ENCODE measurements at regions of chr2 and their contacts with region 1.

Region 1: DNA sequence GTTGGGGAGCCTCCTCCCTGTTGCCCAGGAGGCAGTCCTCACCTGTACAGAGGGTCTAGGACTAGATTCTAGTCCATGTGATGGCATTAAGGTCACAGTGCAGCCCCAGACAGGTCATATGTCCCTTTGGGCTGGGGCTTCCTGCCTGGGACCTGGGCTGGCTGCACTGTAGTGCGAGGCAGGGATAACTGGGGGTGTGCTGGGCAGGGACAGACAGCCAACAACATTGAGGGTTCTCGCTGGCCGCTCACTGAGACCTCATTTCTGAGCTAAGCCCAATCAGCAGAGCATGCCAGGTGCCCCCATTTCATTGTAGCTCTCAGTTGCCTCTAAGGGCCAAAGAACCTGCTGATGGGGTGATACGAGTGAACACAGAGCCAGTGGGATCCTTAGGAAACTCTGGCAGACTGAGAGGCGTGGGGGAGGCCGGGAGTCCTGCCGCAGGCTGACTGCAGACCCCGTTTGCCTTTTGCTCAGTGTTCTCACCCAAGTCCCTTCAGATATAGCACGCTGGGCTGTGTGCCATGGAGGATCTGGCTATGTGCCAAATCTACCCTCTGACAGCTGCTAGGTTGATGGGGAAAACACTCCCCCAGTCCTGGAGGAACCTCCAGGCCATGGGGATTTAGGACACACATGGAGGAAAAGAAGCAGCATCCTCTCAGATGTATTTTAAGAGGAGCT is 51.9 kb downstream of the DYSF start:
- DNase-seq: peak; percentile 44
- ATAC-seq: peak; percentile 28 to 51

Region 2: GRCh38 chr2:71299507-71299906 is 205.7 kb before region 1 on chr2:
- intact Hi-C with region 1: loop called (anchors 5 kb)
- DNase-seq: no peak
- ATAC-seq: no peak

Region 3: DNA sequence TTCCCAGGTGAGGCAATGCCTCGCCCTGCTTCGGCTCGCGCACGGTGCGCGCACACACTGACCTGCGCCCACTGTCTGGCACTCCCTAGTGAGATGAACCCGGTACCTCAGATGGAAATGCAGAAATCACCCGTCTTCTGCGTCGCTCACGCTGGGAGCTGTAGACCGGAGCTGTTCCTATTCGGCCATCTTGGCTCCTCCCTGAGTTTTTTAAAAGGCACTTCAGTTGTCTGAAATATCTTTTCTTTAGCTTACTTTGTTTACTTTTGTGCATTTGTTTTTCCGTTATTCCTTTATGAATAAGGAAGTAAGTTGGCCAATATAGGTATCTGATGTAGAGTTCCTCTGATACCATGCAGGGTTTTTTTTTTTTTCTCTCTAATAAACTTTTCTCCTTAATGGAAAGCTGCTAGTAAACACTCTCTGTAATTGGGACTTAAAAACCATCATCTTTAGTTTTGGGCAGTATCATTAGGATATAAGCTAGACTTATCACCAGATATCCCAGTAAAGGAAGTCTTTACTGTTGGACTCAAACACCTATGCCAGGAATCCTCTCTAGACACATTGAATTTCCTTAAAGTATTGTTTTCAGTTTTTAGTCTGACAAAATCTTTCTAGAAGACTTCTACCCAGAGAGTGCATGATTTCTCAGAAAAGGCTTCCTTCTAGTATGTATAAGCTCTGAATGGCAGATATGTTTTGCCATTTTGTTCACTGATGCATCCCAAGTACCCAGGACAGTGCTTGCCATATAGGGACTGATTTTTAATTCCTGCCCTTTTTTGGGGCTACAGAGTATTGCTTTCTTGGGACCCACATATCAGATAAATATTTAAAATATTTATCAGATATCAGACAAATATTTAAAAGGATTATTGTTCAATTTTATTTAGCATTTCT is 87.7 kb before region 1 on chr2:
- intact Hi-C with region 1: no loop called
- DNase-seq: no peak
- ATAC-seq: no peak

Region 4: DNA sequence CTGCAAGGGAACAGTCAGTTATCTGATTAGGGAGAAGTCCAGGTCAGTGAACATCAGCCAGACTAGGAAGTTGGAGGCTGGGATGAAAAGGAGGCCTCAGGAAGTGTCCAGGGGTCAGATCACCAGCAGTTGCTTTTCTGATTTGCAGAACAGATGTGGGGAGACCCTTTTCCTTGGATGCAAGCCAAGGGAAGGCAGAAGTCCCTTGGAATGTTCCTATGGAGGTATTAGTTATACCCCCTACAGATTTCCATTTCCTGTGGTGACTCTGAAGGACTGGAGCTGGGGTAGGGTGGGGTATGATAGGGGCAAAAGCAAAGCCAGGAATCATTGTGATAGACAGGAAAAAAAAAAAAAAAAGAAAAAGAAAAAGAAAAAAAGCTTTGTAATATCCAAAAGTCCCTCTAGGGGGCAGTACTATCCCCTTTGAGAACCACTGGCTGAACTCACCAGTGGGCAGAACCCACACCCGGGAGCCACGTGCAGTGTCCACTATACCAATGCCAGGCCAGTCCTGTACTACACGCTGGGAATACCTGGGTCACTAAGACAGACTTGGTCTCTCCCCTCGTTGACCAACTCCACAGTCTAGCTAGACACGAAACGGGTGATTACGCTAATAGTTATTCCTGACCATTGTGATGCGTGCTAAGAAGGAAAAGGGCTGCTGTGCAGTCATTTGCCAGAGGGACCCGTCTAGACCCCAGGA is 44.5 kb before region 1 on chr2:
- intact Hi-C with region 1: loop called (anchors 2 to 10 kb)
- DNase-seq: peak; percentile 49
- ATAC-seq: peak; percentile 32 to 37

Measured in left cardiac atrium (tissue), 4 donors.